ENCODE measurements at regions of chr19 and their contacts with region 1.

Region 1: DNA sequence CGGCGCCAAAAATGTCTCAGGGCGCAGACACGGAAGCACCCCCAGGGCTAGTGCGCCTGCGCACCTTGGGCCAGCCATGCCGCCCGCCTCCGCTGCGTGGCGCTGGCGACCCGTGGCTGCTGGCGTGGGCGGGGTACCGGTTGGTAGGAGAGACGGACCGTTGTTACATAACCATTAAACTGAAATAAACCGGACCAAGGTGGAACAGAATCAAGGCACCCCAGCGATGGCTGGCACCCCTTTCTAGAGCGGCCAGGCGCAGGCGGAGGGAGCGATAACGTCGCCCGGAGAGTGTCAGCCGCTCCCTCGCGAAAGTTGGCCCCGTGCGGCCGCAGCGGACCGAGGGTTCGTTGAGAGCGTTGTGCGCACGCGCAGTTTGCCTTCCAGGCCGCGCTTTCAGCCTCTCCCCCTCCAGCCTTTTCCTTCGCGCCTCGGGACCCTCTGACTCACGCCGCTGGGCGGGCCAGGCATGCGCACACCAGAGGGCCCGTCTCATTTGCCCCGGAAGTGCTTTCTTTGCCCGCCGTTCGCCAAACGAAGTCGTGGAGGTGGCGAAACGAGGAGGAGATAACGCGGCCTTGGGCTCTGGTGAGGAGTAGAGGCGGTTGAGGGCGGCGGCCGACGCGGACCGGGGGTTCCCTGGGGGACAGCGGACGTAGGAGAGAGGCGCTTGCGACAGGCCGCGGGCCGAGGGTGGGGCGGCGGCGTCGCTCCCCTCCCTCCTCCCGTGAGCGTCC is at the starts of genes PLEKHJ1 and SF3A2:
- DNase-seq: peak; percentile 85 to 95 (median 92)
- H3K4me3 ChIP-seq: peak within 1 kb of the TSS; percentile 64 to 99 (median 94)
- H3K27ac ChIP-seq: peak within 1 kb of the TSS; percentile 97 to 100 (median 100)
- H3K27me3 ChIP-seq: no peaks in the 10 kb centered on the region
- CTCF ChIP-seq: peak; percentile 86 to 100 (median 96)
- total RNA-seq, gene PLEKHJ1: 32.8 to 66.7 (median 46.1) TPM
- total RNA-seq, gene SF3A2: 27.0 to 68.4 (median 48.2) TPM

Region 2: DNA sequence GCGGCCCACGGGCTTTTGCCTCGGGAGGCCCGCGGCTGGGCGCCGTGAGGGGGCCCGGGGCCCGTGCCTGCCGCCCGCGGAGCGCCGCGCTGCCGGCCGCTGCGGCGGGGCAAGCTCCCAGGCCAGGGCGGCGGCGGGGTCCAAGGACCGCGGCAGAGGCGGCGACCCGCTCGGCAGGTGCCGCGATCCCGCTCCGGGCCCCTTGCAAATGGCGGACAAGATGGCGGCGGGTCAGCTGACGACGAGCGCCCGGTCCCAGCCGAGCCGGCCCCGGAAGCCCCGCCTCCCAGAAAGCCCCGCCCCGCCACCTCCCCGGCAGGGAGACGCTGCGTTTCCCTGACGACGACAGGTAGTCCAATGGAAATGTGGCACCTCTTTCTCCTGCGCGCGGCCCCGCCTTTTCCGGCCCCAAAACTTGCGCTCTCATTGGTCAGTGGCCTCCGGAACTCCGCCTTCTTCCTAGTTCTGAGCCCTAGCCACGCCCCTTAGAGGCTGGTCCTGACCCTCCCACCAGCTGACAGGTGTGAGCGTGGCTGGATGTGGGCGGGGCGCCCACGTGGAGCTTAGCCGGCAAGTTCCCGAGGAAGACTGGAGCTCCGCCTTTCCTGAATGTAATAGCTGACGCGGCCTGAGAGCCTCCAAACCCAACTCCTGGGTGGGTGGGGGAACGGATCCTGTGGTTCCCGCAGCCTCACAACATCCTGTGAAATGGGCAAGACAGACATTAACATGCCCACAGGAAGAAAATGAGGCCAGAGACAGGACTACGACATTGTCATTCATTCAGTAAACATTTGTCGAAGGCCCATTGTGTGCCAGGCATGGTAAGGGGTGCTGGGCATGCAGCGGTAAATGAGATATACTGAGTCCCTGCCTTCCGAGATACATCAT is 84.9 kb before region 1 on chr19 and contains the start of gene AP3D1:
- intact Hi-C with region 1: loop called (anchors 2 to 5 kb)
- DNase-seq: peak; percentile 97 to 100 (median 99)
- H3K4me3 ChIP-seq: peak within 1 kb of the TSS; percentile 71 to 100 (median 97)
- H3K27ac ChIP-seq: peak within 1 kb of the TSS in 58 of 59 donors; percentile 49 to 94 (median 85)
- H3K27me3 ChIP-seq: no peaks in the 10 kb centered on the region
- CTCF ChIP-seq: peak in 16 of 56 donors; percentile 3 to 38 (median 19)
- total RNA-seq, gene AP3D1: 94.6 to 174 (median 127) TPM

Region 3: GRCh38 chr19:2269244-2269947 is 32.9 kb after region 1 on chr19:
- intact Hi-C with region 1: loop called (anchors 1 kb)
- DNase-seq: peak; percentile 95 to 99 (median 98)
- H3K4me3 ChIP-seq: peak overlapping the region; percentile 54 to 100 (median 98)
- H3K27ac ChIP-seq: peak overlapping the region; percentile 86 to 99 (median 98)
- H3K27me3 ChIP-seq: no peaks in the 10 kb centered on the region
- CTCF ChIP-seq: peak in 40 of 56 donors; percentile 11 to 50 (median 32)

Region 4: GRCh38 chr19:2328401-2329148 is 92.1 kb after region 1 on chr19 and contains the starts of genes LSM7 and SPPL2B:
- intact Hi-C with region 1: loop called in 1 of 2 experiments (anchors 5 kb)
- DNase-seq: peak; percentile 82 to 96 (median 87)
- H3K4me3 ChIP-seq: peak within 1 kb of the TSS; percentile 66 to 100 (median 97)
- H3K27ac ChIP-seq: peak within 1 kb of the TSS in 55 of 59 donors; percentile 18 to 93 (median 73)
- H3K27me3 ChIP-seq: no peaks in the 10 kb centered on the region
- CTCF ChIP-seq: peak in 27 of 56 donors; percentile 6 to 58 (median 29)
- total RNA-seq, gene LSM7: 25.2 to 59.5 (median 43.2) TPM
- total RNA-seq, gene SPPL2B: 40.9 to 134 (median 70.6) TPM

Region 5: DNA sequence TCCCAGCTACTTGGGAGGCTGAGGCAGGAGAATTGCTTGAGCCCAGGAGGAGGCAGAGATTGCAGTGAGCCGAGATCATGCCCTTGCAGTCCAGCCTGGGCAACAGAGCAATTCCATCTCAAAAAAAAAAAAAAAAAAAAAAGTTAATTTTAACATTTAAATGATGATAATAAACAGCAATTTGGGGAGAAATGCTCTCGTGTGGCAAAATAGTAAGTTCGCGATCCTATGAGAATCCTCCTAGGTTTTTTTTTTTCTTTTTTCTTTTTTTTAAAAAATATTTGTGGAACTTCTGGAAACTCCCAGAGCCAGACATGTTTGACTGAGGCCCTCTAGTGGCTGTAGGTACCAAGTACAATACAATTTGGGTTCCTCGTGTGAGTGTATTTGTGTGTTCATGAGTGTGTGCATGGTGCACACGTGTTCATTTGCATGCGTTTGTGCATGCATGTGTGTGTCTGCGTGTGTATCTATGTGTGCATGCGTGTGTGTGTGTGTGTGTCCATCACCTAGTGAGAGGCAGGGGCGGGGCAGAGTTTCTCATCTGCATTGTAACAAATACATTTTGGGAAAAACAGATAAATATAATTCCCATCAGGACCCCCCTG is 154.7 kb after region 1 on chr19:
- intact Hi-C with region 1: loop called in 1 of 2 experiments (anchors 5 kb)
- DNase-seq: peak in 4 of 10 donors; percentile 13 to 52 (median 38)
- H3K4me3 ChIP-seq: no peak overlapping the region
- H3K27ac ChIP-seq: no peak overlapping the region
- H3K27me3 ChIP-seq: peaks cover 0 to 9% (median 0%) of the 10 kb centered on the region in 45 donors
- CTCF ChIP-seq: peak; percentile 61 to 91 (median 81)

Measured in dorsolateral prefrontal cortex (tissue), 120 donors.